Ovary (tissue), 10 donors: ENCODE measurements at regions of chr12 and their contacts with region 1.

Region 1: DNA sequence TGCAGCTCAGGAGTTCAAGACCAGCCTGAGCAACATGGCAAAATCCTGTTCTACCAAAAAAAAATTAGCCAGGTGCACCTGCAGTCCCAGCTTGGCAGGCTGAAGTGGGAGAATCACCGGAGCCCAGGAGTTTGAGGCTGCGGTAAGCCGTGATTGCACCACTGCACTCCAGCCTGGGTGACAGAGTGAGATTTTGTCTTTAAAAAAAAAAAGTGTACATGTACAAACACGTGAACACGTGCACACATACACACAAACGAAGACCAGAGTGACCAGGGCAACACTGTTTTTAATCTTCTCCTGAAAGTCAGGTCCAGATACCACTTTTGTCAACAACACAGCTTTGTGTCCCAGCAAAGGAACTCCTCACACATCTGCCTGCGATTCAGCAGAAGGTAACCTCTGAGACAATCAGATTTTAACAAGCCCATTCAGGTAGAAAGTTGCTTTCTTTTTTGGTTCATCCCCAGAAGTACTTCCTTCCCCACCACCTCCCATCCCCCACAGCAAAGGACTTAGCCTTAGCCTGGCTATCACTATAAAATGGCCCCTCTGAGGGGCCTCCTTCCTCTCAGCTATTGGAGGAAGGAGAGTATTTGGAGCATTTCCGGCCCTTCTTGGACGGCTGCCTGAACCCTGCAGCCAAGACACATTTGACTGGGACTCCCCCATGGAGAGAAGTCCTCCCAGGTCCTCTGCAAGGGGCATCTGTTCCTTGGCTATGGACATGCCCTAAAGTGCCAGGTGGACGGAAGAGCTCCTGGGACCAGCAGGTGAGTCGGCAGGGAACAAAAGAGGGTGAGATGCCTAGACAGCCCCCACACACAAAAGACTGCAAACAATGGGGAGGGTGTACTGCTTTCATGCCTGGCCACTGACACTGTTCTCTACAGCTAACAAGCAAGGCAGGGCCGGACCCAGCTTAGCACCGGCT is 9.8 kb downstream of the CTDSP2 start:
- DNase-seq: peak; percentile 88 to 93 (median 92)
- H3K4me3 ChIP-seq: peak overlapping the region; percentile 25
- H3K27ac ChIP-seq: peak overlapping the region in 1 of 2 donors; percentile 58
- H3K4me1 ChIP-seq: peaks cover 67% of the 10 kb centered on the region
- H3K27me3 ChIP-seq: no peaks in the 10 kb centered on the region
- CTCF ChIP-seq: no peak
- EP300 ChIP-seq: no peak
- POLR2A ChIP-seq: no peak

Region 2: GRCh38 chr12:56979628-56980027 is 857.1 kb before region 1 on chr12:
- intact Hi-C with region 1: no loop called
- DNase-seq: no peak
- H3K4me3 ChIP-seq: no peak overlapping the region
- H3K27ac ChIP-seq: no peak overlapping the region
- H3K4me1 ChIP-seq: no peaks in the 10 kb centered on the region
- H3K27me3 ChIP-seq: no peaks in the 10 kb centered on the region
- CTCF ChIP-seq: no peak
- EP300 ChIP-seq: no peak
- POLR2A ChIP-seq: no peak

Region 3: GRCh38 chr12:57416039-57416996 is 420.4 kb before region 1 on chr12:
- intact Hi-C with region 1: no loop called
- DNase-seq: no peak
- H3K4me3 ChIP-seq: no peak overlapping the region
- H3K27ac ChIP-seq: no peak overlapping the region
- H3K4me1 ChIP-seq: no peaks in the 10 kb centered on the region
- H3K27me3 ChIP-seq: no peaks in the 10 kb centered on the region
- CTCF ChIP-seq: no peak
- EP300 ChIP-seq: no peak
- POLR2A ChIP-seq: no peak

Region 4: GRCh38 chr12:57795354-57795753 is 41.4 kb before region 1 on chr12:
- intact Hi-C with region 1: loop called in 1 of 4 experiments (anchors 5 kb)
- DNase-seq: no peak
- H3K4me3 ChIP-seq: no peak overlapping the region
- H3K27ac ChIP-seq: no peak overlapping the region
- H3K4me1 ChIP-seq: no peaks in the 10 kb centered on the region
- H3K27me3 ChIP-seq: no peaks in the 10 kb centered on the region
- CTCF ChIP-seq: no peak
- EP300 ChIP-seq: no peak
- POLR2A ChIP-seq: no peak